CD8-positive, alpha-beta T cell (primary cell): ENCODE measurements at regions of chr2 and their contacts with region 1.

Region 1: DNA sequence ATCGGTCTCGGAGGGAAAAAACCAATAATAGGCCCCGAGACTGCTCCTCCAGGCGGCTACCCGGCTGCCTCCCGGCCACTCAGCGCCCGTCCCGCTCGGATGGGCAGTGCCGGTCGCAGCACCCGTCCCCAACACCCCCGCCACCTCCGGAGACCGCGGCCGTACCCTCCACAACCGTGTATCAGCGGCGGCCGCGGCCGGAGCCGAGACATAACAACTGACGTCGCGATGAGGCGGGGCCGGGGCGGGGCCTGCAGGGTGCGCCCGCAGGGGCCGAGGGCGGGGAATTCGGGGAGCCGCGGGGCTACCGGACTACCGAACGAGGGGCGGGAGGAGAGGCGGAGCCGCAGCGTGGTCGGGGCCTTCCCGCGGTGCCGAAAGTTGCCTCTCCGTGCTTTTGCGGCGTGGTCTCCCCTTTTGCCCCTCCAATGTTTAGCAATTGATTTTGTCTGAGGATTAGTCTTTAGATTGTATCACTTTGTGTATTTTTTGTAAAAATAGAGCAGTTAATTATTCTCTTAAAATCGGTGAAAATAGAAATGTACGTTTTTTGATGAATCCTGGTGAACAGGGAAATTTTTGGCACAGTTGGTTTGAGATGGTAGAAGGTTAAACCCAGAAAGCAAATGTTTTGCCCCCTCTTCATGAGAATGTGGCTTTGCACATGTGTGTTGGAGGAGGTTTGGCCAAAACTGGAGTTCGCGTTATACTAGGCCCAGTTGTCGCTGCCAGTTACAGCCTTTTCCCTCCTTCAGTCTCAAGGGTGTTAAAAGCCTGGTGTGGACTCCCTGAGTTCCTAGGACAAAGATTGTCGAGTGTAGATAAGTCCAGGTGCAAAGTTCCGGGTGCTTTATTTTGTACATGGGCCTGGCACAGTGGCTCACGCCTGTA is at the start of gene RNF103:
- DNase-seq: peak; percentile 80 to 97 (median 95)
- ATAC-seq: peak; percentile 87
- H3K4me3 ChIP-seq: peak within 1 kb of the TSS; percentile 64 to 76
- H3K4me3 Mint-ChIP-seq: peak within 1 kb of the TSS; percentile 95
- H3K27ac ChIP-seq: peak within 1 kb of the TSS; percentile 91 to 93
- H3K27ac Mint-ChIP-seq: peak within 1 kb of the TSS; percentile 94
- H3K4me1 ChIP-seq: peaks cover 27% of the 10 kb centered on the region
- H3K4me1 Mint-ChIP-seq: peaks cover 37% of the 10 kb centered on the region
- H3K27me3 ChIP-seq: no peaks in the 10 kb centered on the region
- H3K27me3 Mint-ChIP-seq: no peaks in the 10 kb centered on the region
- CTCF ChIP-seq: no peak
- total RNA-seq, gene RNF103: 118 to 120 TPM

Region 2: GRCh38 chr2:85549826-85550225 is 1074.1 kb before region 1 on chr2:
- CTCF ChIA-PET with region 1: no interaction called
- POLR2A ChIA-PET with region 1: no interaction called
- intact Hi-C with region 1: no loop called
- DNase-seq: no peak
- ATAC-seq: no peak
- H3K4me3 ChIP-seq: no peak overlapping the region
- H3K4me3 Mint-ChIP-seq: no peak overlapping the region
- H3K27ac ChIP-seq: no peak overlapping the region
- H3K27ac Mint-ChIP-seq: no peak overlapping the region
- H3K4me1 ChIP-seq: no peaks in the 10 kb centered on the region
- H3K4me1 Mint-ChIP-seq: peaks cover 4% of the 10 kb centered on the region
- H3K27me3 ChIP-seq: no peaks in the 10 kb centered on the region
- H3K27me3 Mint-ChIP-seq: no peaks in the 10 kb centered on the region
- CTCF ChIP-seq: no peak

Region 3: GRCh38 chr2:86195055-86195807 is 428.7 kb before region 1 on chr2 and contains the start of gene IMMT:
- CTCF ChIA-PET with region 1: no interaction called
- POLR2A ChIA-PET with region 1: no interaction called
- intact Hi-C with region 1: no loop called
- DNase-seq: peak; percentile 79 to 97 (median 93)
- ATAC-seq: peak; percentile 90
- H3K4me3 ChIP-seq: peak within 1 kb of the TSS; percentile 96 to 98
- H3K4me3 Mint-ChIP-seq: peak within 1 kb of the TSS; percentile 89
- H3K27ac ChIP-seq: peak within 1 kb of the TSS; percentile 91 to 98
- H3K27ac Mint-ChIP-seq: peak within 1 kb of the TSS; percentile 90
- H3K4me1 ChIP-seq: peaks cover 37% of the 10 kb centered on the region
- H3K4me1 Mint-ChIP-seq: peaks cover 63% of the 10 kb centered on the region
- H3K27me3 ChIP-seq: no peaks in the 10 kb centered on the region
- H3K27me3 Mint-ChIP-seq: no peaks in the 10 kb centered on the region
- CTCF ChIP-seq: no peak
- total RNA-seq, gene IMMT: 34.3 to 35.8 TPM

Region 4: DNA sequence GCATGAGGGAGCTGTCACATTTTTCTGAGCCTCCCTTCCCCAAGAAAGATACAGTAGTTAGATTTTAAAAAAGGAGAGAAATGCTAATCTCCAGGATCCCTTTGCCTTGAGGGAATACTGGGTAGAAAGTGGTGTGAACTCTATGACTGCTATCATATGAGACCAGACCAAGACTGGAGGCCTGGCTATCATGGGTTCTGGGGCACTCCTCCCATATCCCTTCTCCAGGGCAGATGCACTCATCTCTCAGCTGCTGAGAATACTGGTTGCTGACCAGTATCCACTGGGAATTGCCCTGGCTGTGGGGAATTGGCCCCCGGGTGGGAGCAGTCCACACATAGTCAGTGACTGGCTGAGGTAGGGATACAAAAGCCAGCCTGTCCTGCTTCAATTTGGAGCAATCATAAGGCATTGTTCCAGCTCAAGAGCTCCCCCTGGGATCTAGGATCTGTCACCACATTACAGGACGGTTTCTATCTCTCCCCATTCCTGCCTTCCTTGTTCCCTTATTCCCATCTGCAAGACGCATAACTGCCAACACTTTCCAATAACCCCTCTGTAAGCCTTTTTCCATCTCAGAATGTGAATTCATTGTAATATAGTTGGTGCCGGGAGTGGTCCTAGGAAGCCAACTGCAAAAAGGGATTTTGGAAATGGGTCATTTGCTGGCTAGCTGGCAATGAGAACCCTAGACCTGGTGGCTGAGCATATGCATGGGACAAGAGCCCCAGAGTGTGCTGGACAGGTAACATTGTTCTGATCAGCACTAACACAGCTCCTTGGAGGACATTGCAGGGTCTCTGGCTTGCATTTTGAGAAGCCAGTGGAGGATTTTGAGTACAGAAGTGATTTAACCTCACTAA is 251.0 kb before region 1 on chr2:
- CTCF ChIA-PET with region 1: no interaction called
- POLR2A ChIA-PET with region 1: no interaction called
- intact Hi-C with region 1: no loop called
- DNase-seq: peak in 1 of 9 experiments; percentile 22
- ATAC-seq: no peak
- H3K4me3 ChIP-seq: no peak overlapping the region
- H3K4me3 Mint-ChIP-seq: no peak overlapping the region
- H3K27ac ChIP-seq: peak overlapping the region in 1 of 2 experiments; percentile 38
- H3K27ac Mint-ChIP-seq: peak overlapping the region; percentile 78
- H3K4me1 ChIP-seq: peaks cover 30% of the 10 kb centered on the region
- H3K4me1 Mint-ChIP-seq: peaks cover 41% of the 10 kb centered on the region
- H3K27me3 ChIP-seq: peaks cover 0 to 5% of the 10 kb centered on the region in 2 experiments
- H3K27me3 Mint-ChIP-seq: no peaks in the 10 kb centered on the region
- CTCF ChIP-seq: no peak

Region 5: DNA sequence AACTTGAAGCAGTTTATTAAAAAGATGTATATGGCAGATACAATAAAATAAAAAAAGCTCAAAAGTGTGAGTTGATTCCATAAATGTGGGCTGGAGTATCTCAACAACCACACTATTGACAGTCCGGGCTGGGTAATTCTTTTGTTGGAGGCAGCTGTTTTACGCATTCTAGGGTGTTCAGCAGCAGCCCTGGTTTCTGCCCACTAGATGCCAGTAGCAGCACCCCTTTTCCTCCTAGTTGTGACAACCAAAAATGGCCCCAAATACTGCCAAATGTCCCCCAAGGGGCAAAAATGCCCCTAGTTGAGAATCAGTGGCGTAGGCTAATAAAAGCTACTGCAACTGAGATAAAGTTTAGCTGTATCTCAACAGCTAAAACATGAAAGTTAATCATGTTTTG is 105.4 kb before region 1 on chr2:
- CTCF ChIA-PET with region 1: interaction called, 10 read pairs
- POLR2A ChIA-PET with region 1: no interaction called
- intact Hi-C with region 1: loop called in 1 of 2 experiments (anchors 1 kb)
- DNase-seq: peak; percentile 1 to 71 (median 50)
- ATAC-seq: peak; percentile 81
- H3K4me3 ChIP-seq: no peak overlapping the region
- H3K4me3 Mint-ChIP-seq: no peak overlapping the region
- H3K27ac ChIP-seq: no peak overlapping the region
- H3K27ac Mint-ChIP-seq: no peak overlapping the region
- H3K4me1 ChIP-seq: peaks cover 4% of the 10 kb centered on the region
- H3K4me1 Mint-ChIP-seq: peaks cover 10% of the 10 kb centered on the region
- H3K27me3 ChIP-seq: no peaks in the 10 kb centered on the region
- H3K27me3 Mint-ChIP-seq: no peaks in the 10 kb centered on the region
- CTCF ChIP-seq: peak; percentile 74

Region 6: DNA sequence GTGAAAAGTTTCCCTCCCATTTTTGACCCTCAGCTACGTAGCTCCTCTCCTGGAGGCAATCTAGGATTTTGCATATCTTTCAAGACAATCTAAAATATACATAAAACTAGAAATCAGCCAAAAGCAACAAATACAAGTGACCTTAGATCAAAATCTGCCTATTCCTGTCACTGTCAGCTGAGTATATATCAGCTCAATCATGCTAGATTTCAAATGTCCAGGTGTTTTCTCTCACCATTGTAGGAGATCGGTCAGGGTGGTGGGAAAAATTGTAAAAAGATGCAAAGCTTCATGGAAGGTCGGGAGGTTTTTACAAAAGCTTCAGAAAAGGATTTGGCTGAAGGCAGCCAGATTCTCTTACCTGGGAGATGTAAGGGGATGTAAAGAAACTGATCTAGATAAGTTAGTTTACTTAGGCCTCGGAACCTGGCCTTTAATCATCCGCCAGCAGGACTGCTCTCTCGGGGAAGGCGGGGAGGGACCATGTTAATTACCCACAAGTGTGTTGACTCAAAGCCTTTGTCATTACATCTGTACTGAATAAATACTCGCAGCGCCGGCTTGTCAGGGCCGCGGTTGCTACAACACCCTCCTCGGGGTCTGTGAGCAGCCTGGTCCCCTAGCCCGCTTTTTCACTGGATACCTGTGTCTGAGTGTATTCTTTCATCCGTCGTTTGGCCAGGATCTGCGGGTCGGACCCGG is 67.5 kb before region 1 on chr2:
- CTCF ChIA-PET with region 1: no interaction called
- POLR2A ChIA-PET with region 1: interaction called, 17 read pairs
- intact Hi-C with region 1: loop called in 1 of 2 experiments (anchors 2 kb)
- DNase-seq: no peak
- ATAC-seq: no peak
- H3K4me3 ChIP-seq: no peak overlapping the region
- H3K4me3 Mint-ChIP-seq: no peak overlapping the region
- H3K27ac ChIP-seq: no peak overlapping the region
- H3K27ac Mint-ChIP-seq: no peak overlapping the region
- H3K4me1 ChIP-seq: peaks cover 47% of the 10 kb centered on the region
- H3K4me1 Mint-ChIP-seq: peaks cover 61% of the 10 kb centered on the region
- H3K27me3 ChIP-seq: no peaks in the 10 kb centered on the region
- H3K27me3 Mint-ChIP-seq: no peaks in the 10 kb centered on the region
- CTCF ChIP-seq: no peak

Region 7: DNA sequence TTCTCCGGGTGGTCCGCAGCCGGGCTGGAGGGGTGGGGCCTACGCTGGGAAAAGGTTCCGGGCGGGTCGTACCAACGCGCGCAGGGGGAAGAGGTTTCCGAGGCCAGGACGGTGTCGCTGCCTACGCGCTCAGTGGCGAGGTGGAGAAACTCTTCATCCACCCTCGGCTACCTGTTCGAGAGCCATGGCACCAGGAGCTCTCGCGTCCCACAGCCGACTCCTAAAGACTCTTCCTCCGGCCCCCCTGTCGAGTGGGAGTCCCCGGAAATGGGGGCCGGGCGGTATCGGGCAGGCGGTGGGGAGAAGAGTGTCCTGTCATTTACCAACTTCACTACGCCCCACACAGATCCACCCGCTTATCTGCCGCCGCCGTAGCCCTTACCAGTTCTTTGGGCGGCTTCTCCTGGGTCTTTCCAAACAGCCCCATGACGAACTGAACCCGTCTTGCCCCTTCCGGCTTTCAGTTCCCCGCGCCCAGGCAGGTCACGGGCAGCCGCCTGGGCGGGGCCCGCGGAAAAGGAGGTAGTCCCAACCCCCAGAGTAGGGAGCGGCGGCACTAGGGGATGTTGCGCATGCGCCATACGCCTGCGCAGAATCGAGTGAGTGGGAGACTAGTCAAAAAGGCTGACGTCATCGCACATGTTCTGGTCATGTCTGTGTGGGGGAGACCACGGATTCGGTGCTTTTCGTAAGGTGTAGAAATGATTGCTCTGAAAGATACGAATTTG is 60.8 kb before region 1 on chr2 and contains the start of gene CHMP3:
- CTCF ChIA-PET with region 1: no interaction called
- POLR2A ChIA-PET with region 1: interaction called, 6 read pairs
- intact Hi-C with region 1: loop called (anchors 1 kb)
- DNase-seq: peak; percentile 92 to 99 (median 95)
- ATAC-seq: peak; percentile 89
- H3K4me3 ChIP-seq: peak within 1 kb of the TSS; percentile 86 to 89
- H3K4me3 Mint-ChIP-seq: peak within 1 kb of the TSS; percentile 95
- H3K27ac ChIP-seq: peak within 1 kb of the TSS; percentile 95 to 99
- H3K27ac Mint-ChIP-seq: peak within 1 kb of the TSS; percentile 99
- H3K4me1 ChIP-seq: peaks cover 36% of the 10 kb centered on the region
- H3K4me1 Mint-ChIP-seq: peaks cover 42% of the 10 kb centered on the region
- H3K27me3 ChIP-seq: no peaks in the 10 kb centered on the region
- H3K27me3 Mint-ChIP-seq: peaks cover 2% of the 10 kb centered on the region
- CTCF ChIP-seq: no peak
- total RNA-seq, gene CHMP3: 61.0 to 63.2 TPM

Region 8: DNA sequence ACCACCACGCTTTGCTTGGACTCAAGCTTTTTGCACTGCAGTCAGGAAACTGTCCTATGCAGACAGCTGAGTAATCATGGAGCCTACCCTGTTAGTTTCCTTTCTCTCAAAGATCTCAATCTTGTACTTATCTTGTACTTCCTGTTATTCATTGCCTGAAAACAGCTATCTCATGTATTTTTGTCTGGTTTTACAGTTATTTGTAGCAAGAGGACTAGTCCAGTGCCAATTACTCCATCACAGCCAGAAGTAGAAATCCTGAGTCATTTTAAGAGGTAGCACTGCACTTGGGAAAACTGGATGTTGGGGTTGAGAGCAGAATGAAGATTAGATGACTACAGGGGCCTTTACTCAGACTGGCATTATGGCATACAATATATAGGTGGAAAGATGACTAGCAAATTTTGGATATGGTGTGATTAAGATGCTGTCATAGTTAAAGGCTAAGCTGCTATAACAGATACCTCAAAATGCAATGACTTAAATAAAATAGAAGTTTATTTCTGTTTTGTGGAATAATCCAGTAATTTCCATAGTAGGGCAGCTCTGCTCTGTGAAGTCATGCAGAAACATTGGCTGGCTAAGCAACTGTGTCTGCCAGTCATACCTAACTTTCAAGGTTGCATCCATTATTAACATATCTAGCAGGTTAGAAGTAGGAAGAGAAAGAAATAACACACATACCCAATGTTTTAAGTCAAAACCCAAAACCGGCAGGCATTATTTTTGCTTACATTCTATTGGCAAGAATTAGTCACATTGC is 39.6 kb before region 1 on chr2:
- CTCF ChIA-PET with region 1: no interaction called
- POLR2A ChIA-PET with region 1: no interaction called
- intact Hi-C with region 1: loop called in 1 of 2 experiments (anchors 5 kb)
- DNase-seq: peak in 3 of 9 experiments; percentile 10 to 38 (median 18)
- ATAC-seq: peak; percentile 85
- H3K4me3 ChIP-seq: no peak overlapping the region
- H3K4me3 Mint-ChIP-seq: peak overlapping the region; percentile 38
- H3K27ac ChIP-seq: peak overlapping the region in 1 of 2 experiments; percentile 44
- H3K27ac Mint-ChIP-seq: peak overlapping the region; percentile 92
- H3K4me1 ChIP-seq: peaks cover 14% of the 10 kb centered on the region
- H3K4me1 Mint-ChIP-seq: peaks cover 18% of the 10 kb centered on the region
- H3K27me3 ChIP-seq: no peaks in the 10 kb centered on the region
- H3K27me3 Mint-ChIP-seq: no peaks in the 10 kb centered on the region
- CTCF ChIP-seq: no peak

Region 9: DNA sequence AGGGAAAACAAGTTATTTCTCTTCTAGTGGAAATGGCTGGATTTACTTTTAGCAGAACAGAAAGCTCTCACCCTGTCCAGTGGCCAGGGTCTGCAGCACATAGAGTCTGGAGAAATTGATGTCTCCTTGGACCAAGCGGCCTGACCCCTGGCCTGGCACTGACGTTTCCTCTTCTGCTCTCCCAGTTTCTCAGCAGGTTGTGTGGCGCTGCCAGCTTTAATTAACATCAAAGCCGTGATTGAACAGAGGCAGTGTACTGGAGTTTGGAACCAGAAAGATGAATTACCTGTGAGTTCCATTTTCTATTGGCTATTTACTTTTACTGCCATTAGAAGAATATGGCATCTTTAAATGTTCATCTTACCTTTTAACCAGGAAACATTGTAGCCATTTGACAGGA is 145.9 kb after region 1 on chr2:
- CTCF ChIA-PET with region 1: no interaction called
- POLR2A ChIA-PET with region 1: no interaction called
- intact Hi-C with region 1: no loop called
- DNase-seq: no peak
- ATAC-seq: no peak
- H3K4me3 ChIP-seq: no peak overlapping the region
- H3K4me3 Mint-ChIP-seq: no peak overlapping the region
- H3K27ac ChIP-seq: no peak overlapping the region
- H3K27ac Mint-ChIP-seq: no peak overlapping the region
- H3K4me1 ChIP-seq: peaks cover 8% of the 10 kb centered on the region
- H3K4me1 Mint-ChIP-seq: peaks cover 30% of the 10 kb centered on the region
- H3K27me3 ChIP-seq: no peaks in the 10 kb centered on the region
- H3K27me3 Mint-ChIP-seq: no peaks in the 10 kb centered on the region
- CTCF ChIP-seq: no peak

Region 10: GRCh38 chr2:86790676-86791572 is 167.0 kb after region 1 on chr2 and contains the start of gene CD8A:
- CTCF ChIA-PET with region 1: no interaction called
- POLR2A ChIA-PET with region 1: no interaction called
- intact Hi-C with region 1: loop called in 1 of 2 experiments (anchors 5 kb)
- DNase-seq: peak; percentile 60 to 93 (median 82)
- ATAC-seq: peak; percentile 23
- H3K4me3 ChIP-seq: peak within 1 kb of the TSS; percentile 93 to 98
- H3K4me3 Mint-ChIP-seq: peak within 1 kb of the TSS; percentile 95
- H3K27ac ChIP-seq: peak within 1 kb of the TSS; percentile 95 to 99
- H3K27ac Mint-ChIP-seq: peak within 1 kb of the TSS; percentile 99
- H3K4me1 ChIP-seq: peaks cover 69% of the 10 kb centered on the region
- H3K4me1 Mint-ChIP-seq: peaks cover 73% of the 10 kb centered on the region
- H3K27me3 ChIP-seq: no peaks in the 10 kb centered on the region
- H3K27me3 Mint-ChIP-seq: no peaks in the 10 kb centered on the region
- CTCF ChIP-seq: no peak
- total RNA-seq, gene CD8A: 502 to 503 TPM

Region 11: GRCh38 chr2:86808315-86809161 is 184.6 kb after region 1 on chr2:
- CTCF ChIA-PET with region 1: no interaction called
- POLR2A ChIA-PET with region 1: interaction called, 3 read pairs
- intact Hi-C with region 1: loop called in 1 of 2 experiments (anchors 1 kb)
- DNase-seq: peak; percentile 93 to 100 (median 97)
- ATAC-seq: peak; percentile 69
- H3K4me3 ChIP-seq: peak overlapping the region; percentile 77 to 78
- H3K4me3 Mint-ChIP-seq: peak overlapping the region; percentile 98
- H3K27ac ChIP-seq: peak overlapping the region; percentile 75 to 78
- H3K27ac Mint-ChIP-seq: peak overlapping the region; percentile 99
- H3K4me1 ChIP-seq: peaks cover 51% of the 10 kb centered on the region
- H3K4me1 Mint-ChIP-seq: peaks cover 71% of the 10 kb centered on the region
- H3K27me3 ChIP-seq: no peaks in the 10 kb centered on the region
- H3K27me3 Mint-ChIP-seq: no peaks in the 10 kb centered on the region
- CTCF ChIP-seq: peak; percentile 79